Motor neuron (in vitro differentiated cells): ENCODE measurements at regions of chr10 and their contacts with region 1.

Region 1: GRCh38 chr10:90862908-90863514 is 5.2 kb upstream of the HTR7 start:
- ATAC-seq: peak in 1 of 8 experiments; percentile 20
- H3K4me3 ChIP-seq: no peak overlapping the region
- H3K27ac ChIP-seq: no peak overlapping the region
- H3K4me1 ChIP-seq: no peaks in the 10 kb centered on the region

Region 2: GRCh38 chr10:89793649-89794254 is 1069.3 kb before region 1 on chr10:
- in situ Hi-C with region 1: loop called in 4 of 9 experiments (anchors 10 to 25 kb)
- ATAC-seq: peak; percentile 52 to 90 (median 77)
- H3K4me3 ChIP-seq: no peak overlapping the region
- H3K27ac ChIP-seq: no peak overlapping the region
- H3K4me1 ChIP-seq: no peaks in the 10 kb centered on the region

Region 3: DNA sequence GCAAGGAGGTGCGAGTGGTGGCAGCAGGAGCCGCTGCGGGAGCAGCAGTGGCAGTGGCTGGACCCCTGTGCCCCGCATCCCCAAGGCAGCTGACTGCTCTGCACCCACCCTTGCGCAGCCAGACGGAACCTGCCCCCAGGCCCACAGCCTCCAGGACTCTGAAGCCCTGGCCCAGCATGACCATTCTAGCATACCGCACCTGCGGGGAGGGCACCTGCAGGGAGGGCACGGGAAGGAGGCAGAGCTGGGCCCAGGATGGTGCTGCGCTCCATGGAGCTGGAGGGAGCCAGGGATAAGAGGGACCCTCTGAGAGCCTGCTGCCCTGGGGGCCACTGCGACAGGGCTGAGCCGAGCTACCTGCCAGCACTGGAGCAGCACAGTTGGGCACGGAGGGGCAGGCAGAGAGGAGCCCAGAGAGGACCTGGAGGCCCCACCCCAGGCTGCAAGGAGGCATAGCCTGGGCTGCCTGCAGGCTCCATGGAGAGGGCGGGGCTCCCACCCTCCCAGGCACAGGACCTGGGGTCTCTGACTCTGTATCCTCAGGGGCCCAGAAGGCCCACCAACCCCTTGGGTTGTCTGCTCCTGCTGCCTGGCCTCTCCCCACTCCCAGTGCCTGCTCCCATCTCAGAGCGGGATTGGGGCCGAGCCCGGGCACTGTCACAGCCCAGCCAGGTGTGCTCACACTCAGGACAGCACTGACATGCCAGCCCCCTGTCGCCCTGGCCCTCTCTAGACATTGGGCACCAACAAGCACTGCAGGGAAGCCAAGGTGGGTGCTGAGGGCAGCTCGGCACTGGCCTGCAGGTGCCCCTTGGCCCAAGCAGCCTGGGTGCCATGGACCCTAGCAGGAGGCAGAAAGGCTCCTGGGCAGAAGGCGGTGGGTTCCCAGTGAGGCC is 92.8 kb before region 1 on chr10:
- in situ Hi-C with region 1: loop called in 2 of 9 experiments (anchors 10 to 25 kb)
- ATAC-seq: peak in 1 of 8 experiments; percentile 29
- H3K4me3 ChIP-seq: no peak overlapping the region
- H3K27ac ChIP-seq: no peak overlapping the region
- H3K4me1 ChIP-seq: no peaks in the 10 kb centered on the region